Endothelial cell of umbilical vein (primary cell): ENCODE measurements at regions of chr6 and their contacts with region 1.

Region 1: DNA sequence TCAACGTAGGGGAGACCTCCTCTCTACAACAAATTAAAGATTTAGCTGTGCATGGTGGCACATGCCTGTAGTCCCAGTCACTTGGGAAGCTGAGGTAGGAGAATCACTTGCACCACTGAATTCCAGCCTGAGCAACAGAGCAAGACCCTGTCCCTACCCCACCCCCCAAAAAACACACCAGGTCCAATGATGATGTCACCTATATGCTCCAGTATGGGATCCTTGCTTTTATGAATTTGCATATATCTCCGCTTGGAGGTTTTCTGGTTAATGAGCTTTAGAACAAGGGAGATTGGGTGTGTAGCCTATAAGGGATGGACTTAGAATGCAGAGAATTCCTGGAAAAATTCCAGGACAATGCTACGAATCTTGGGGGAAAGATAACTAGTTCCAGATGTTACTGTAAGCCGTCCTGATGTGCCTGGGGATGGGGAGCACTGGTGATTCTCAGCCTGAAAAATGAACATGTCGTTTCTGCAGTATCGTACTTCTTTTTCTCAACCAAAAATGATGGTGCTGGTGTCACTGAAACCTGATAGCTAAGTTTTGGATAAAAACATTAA is 61.1 kb downstream of the ZBTB2 start:
- DNase-seq: no peak
- H3K4me3 ChIP-seq: no peak overlapping the region
- H3K27ac ChIP-seq: no peak overlapping the region
- H3K4me1 ChIP-seq: peaks cover 9% of the 10 kb centered on the region
- H3K27me3 ChIP-seq: no peaks in the 10 kb centered on the region
- CTCF ChIP-seq: no peak
- POLR2A ChIP-seq: no peak

Region 2: DNA sequence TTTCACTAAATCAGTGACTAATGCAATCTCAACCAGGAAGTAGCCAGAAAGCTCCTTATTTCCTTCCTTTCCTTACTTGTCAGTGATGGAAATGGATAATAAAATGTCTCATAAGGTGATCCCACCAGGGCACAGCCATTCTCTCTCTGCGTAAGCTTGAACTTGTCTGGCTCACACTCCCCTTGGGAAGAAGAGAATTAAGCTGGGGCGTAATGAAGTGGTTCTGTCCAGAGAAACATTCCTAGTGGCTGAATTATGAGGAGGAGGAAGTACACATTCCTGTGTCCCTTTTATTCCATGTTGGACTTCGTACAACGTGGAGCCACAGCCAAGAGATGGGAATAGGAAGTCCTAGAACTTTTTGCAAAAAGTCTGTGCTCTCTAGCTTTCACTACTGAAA is 371.0 kb before region 1 on chr6:
- CTCF ChIA-PET with region 1: interaction called, 20 read pairs
- POLR2A ChIA-PET with region 1: no interaction called
- dilution Hi-C with region 1: no loop called
- intact Hi-C with region 1: no loop called
- DNase-seq: peak; percentile 67
- H3K4me3 ChIP-seq: no peak overlapping the region
- H3K27ac ChIP-seq: peak overlapping the region; percentile 80
- H3K4me1 ChIP-seq: peaks cover 13% of the 10 kb centered on the region
- H3K27me3 ChIP-seq: no peaks in the 10 kb centered on the region
- CTCF ChIP-seq: no peak
- POLR2A ChIP-seq: no peak

Region 3: DNA sequence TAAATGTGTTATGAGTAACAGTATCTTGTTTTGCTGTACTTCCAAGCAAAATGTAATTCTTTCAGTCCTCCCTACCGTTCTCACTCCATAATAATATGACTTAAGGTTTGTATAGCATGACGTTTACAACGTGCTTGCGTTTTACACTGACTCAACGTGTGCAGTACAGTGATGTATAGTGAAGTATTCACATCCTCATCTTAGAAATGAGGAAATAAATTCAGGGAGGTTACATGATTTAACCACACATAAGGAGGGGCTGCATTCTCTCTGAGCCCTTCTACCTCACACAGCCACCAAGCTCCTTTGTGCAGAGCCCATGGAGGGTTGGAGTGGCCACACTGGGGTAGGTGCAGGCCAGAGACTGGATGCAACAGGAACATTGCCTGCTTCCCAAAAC is 300.2 kb before region 1 on chr6:
- CTCF ChIA-PET with region 1: interaction called, 10 read pairs
- POLR2A ChIA-PET with region 1: no interaction called
- dilution Hi-C with region 1: no loop called
- intact Hi-C with region 1: no loop called
- DNase-seq: no peak
- H3K4me3 ChIP-seq: no peak overlapping the region
- H3K27ac ChIP-seq: no peak overlapping the region
- H3K4me1 ChIP-seq: no peaks in the 10 kb centered on the region
- H3K27me3 ChIP-seq: no peaks in the 10 kb centered on the region
- CTCF ChIP-seq: no peak
- POLR2A ChIP-seq: no peak

Region 4: DNA sequence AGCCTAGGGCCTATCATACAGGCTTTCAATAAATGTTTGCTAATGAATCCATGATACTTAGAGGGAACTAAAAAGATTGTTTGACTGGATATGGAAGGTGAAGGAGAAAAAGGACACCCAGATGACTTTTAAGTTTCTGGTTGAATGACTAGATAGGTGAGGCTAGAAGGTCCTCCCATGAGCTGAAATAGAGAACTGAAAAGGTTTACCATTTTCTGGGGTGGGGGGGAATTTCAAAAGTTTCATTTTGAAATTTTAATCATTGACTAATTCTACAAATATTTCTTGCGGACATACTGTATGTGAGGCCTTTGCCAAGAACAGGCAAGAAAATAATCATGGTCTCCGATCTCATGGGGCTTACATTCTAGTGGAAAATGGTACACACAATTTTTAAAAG is 79.0 kb after region 1 on chr6:
- CTCF ChIA-PET with region 1: no interaction called
- POLR2A ChIA-PET with region 1: no interaction called
- dilution Hi-C with region 1: no loop called
- intact Hi-C with region 1: no loop called
- DNase-seq: no peak
- H3K4me3 ChIP-seq: no peak overlapping the region
- H3K27ac ChIP-seq: no peak overlapping the region
- H3K4me1 ChIP-seq: no peaks in the 10 kb centered on the region
- H3K27me3 ChIP-seq: no peaks in the 10 kb centered on the region
- CTCF ChIP-seq: no peak
- POLR2A ChIP-seq: no peak

Region 5: DNA sequence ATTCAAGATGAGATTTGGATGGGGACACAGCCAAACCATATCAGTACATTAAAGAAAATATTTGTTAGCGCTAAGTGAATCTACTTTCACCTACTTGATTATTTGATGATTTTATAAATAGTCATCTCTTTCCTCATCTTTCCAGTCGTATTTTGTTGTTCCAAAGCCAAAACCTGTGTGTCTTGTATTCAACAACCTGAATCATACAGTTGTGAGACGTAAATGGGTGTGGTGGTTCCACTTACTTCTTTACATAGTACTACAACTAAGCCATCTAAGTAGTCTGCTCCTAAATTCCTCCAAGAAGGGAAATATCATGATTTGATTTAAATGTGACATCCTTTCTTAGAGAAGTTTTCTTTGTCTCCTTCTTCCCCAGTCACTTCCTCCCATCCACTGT is 610.1 kb after region 1 on chr6:
- CTCF ChIA-PET with region 1: no interaction called
- POLR2A ChIA-PET with region 1: no interaction called
- dilution Hi-C with region 1: no loop called
- intact Hi-C with region 1: no loop called
- DNase-seq: no peak
- H3K4me3 ChIP-seq: no peak overlapping the region
- H3K27ac ChIP-seq: no peak overlapping the region
- H3K4me1 ChIP-seq: no peaks in the 10 kb centered on the region
- H3K27me3 ChIP-seq: peaks cover 0 to 9% of the 10 kb centered on the region in 2 experiments
- CTCF ChIP-seq: no peak
- POLR2A ChIP-seq: no peak